ENCODE measurements at regions of chr1 and their contacts with region 1.

Region 1: GRCh38 chr1:219189021-219189824 is 15.5 kb downstream of the LYPLAL1 start:
- DNase-seq: no peak
- H3K4me3 Mint-ChIP-seq: peak overlapping the region; percentile 22
- H3K27ac Mint-ChIP-seq: peak overlapping the region; percentile 48
- H3K4me1 Mint-ChIP-seq: peaks cover 28% of the 10 kb centered on the region
- H3K27me3 Mint-ChIP-seq: no peaks in the 10 kb centered on the region

Region 2: DNA sequence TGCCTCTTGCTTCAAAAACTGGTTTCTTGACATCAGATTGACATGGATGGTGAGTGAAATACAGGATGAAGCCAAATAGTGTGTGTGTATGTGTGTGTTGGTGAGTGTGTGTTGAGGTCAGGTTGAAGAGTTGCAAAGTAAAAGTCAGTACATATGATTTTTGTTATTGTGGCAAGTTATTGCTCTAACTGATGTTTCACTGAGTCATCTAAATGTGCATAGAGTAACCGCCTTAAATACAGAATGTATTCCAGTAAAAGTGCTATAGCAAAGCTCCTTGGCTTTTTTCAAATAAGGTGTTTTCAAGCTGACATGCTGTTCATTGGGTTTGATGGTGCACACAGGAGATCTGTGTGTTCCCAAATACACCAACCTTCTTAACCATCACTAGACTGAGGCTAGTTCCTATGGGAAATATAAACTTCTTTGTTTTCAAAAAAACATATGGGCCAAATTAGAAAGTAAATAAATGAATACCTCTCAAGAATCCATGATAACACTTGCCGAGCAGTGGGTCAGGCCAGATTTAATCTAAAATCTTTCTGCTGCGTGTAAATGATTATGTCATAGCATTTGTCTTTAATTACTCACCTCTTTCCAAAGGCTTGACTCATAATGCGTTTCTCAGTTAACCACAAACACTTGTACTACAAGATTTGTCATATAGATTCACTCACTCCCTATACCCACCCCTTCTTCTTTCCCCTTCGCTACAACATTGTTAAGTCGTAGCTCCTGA is 135.6 kb after region 1 on chr1:
- intact Hi-C with region 1: loop called (anchors 1 kb)
- DNase-seq: no peak
- H3K4me3 Mint-ChIP-seq: no peak overlapping the region
- H3K27ac Mint-ChIP-seq: no peak overlapping the region
- H3K4me1 Mint-ChIP-seq: no peaks in the 10 kb centered on the region
- H3K27me3 Mint-ChIP-seq: no peaks in the 10 kb centered on the region

Region 3: GRCh38 chr1:219963432-219963831 is 774.2 kb after region 1 on chr1:
- intact Hi-C with region 1: no loop called
- DNase-seq: no peak
- H3K4me3 Mint-ChIP-seq: no peak overlapping the region
- H3K27ac Mint-ChIP-seq: no peak overlapping the region
- H3K4me1 Mint-ChIP-seq: peaks cover 11% of the 10 kb centered on the region
- H3K27me3 Mint-ChIP-seq: no peaks in the 10 kb centered on the region